Activated CD4-positive, alpha-beta memory T cell treated with anti-CD3 and anti-CD28 coated beads, Interleukin-2, amount 10 ng/mL, durations not matched to agents 7 days and 5 days (primary cell): ENCODE measurements at regions of chr6 and their contacts with region 1.

Region 1: DNA sequence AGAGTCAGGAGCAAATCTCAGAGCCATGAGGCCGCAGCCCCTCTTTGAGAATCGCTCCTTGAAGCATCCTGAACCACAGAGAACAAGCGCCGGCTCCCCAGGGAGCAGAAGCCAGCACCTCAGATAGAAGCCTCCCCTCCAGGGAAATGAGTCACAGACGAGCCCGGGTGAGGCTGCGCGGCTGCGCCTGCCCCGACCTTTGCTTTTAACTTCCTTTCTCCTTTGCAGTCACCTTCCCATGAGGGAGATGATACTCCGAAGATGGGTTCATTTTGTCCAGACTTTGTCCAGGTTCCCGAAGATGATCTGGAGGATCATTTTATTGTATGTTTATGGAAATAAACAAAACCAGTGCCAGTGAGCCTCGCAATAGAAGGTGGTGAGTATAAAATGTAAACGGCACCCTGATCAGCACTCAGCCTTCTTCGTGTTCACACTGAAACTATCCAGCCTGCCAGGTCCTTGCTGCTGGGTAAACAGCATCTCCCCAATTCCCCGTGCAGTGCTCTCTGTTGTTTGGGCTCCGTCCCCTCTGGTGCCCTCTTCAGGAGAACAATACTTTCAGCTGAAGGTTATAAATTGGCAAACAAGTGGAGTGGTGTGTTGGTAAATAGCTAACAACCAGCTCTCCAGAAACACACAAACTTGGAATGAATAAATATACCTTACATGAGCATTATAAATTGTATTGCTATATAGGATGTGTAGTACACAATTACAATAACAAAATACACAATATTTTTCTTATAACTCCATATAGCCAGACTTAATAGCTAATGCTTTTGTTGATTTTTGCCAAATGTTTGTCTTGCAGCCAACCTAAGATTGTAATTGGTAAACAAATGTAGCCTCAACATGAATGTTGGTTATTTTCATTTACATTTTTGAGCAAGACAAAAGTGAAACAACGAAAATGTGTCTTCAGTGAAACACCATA is 41.4 kb upstream of the TMEM181 start:
- DNase-seq: peak; percentile 74
- H3K4me3 Mint-ChIP-seq: peak overlapping the region; percentile 81
- H3K27ac Mint-ChIP-seq: peak overlapping the region; percentile 87
- H3K4me1 Mint-ChIP-seq: peaks cover 41% of the 10 kb centered on the region
- H3K27me3 Mint-ChIP-seq: peaks cover 11% of the 10 kb centered on the region

Region 2: GRCh38 chr6:158452182-158452581 is 66.3 kb before region 1 on chr6:
- CTCF ChIA-PET with region 1: no interaction called
- POLR2A ChIA-PET with region 1: no interaction called
- DNase-seq: no peak
- H3K4me3 Mint-ChIP-seq: no peak overlapping the region
- H3K27ac Mint-ChIP-seq: no peak overlapping the region
- H3K4me1 Mint-ChIP-seq: no peaks in the 10 kb centered on the region
- H3K27me3 Mint-ChIP-seq: no peaks in the 10 kb centered on the region

Region 3: DNA sequence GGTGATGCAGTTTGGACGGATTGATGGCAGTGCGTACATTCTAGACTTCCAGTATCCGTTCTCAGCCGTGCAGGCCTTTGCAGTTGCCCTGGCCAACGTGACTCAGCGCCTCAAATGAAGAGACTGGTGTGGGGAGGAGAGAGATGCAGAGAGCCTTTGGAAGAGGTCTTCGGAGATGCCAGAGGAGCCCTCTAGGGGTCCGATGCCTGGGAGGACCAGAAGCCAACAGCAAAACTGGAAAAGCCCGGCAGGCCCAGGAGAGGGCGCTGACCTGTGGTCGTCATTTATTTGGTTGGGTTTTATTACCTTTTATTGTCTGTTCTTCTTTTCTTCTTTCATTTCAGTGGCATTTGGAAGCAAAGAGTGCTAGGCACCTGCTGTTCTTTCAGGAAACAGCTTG is 11.9 kb before region 1 on chr6:
- CTCF ChIA-PET with region 1: interaction called, 10 read pairs
- POLR2A ChIA-PET with region 1: no interaction called
- DNase-seq: no peak
- H3K4me3 Mint-ChIP-seq: no peak overlapping the region
- H3K27ac Mint-ChIP-seq: no peak overlapping the region
- H3K4me1 Mint-ChIP-seq: no peaks in the 10 kb centered on the region
- H3K27me3 Mint-ChIP-seq: no peaks in the 10 kb centered on the region